ENCODE measurements at regions of chr5 and their contacts with region 1.

Region 1: DNA sequence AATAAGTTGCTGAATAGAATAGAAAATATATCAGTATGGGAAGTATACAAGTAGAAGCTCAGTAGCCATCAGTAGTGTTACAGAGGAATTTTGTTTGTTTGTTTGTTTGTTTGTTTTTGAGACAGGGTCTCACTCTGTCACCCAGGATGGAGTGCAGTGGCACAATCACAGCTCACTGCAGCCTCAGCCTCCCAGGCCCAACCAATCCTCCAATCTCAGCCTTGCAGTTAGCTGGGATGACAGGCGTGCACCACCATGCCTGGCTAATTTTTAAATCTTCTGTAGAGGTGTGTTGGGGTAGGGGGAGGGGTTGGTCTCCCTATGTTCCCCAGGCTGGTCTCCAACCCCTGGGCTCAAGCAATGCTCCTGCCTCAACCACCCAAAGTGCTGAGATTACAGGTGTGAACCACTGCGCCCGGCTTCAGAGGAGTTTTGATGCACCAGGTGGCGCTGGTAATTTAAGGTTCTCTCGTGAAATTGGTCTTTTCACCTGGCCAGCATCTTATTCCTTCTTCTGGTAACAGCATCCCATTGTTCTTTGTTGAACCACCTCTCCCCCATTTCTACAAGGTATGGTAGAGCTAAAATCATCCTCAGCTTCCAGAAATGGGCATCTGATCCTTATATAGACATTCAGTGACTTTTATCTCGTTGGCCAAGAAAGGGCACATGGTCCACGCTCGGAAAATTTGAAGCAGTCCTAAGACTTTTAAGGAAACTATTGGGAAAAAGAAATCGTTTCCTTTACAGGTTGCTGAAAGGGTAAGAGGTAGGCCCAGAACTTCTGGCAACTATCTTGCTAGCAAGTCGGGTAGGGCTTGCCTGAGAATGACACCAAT is 157.1 kb downstream of the ARRDC3 start:
- DNase-seq: peak; percentile 42
- CTCF ChIP-seq: peak; percentile 52

Region 2: DNA sequence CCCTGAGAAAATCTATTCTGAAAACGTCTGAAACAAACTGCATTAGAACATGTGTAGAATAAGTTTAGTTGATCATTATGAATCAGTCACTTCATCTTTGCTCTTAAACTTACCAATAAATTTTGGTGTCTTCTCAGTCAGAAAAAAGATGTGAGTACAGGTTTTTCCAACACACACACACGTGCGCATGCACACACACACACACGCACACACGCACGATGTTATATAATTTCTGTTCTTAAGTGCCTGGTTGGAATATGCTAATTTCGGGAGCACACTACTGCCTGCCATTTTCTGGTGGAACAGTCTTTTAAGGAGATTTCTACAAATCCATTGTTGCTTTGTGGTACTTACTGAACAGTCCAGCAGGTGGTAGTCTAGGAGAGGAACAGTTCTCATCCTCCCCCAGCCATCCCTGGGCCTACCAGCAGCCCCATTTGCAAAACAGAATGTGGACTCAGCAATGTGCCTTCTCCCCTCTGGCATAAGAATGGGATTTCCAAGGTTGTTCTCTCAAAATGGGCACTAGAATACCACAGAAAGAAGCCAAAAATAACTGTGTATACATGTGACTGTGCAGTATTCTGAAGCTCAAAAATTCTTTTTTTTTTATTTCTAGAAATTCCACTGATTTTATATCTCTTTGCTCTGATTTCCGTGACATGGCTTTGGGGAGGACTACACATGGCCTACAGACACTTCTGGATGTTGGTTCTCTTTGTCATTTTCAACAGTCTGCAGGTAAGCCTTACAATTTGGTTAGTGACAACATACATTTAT is 124.3 kb before region 1 on chr5:
- in situ Hi-C with region 1: loop called (anchors 10 kb)
- DNase-seq: peak; percentile 45
- CTCF ChIP-seq: peak; percentile 62

Region 3: DNA sequence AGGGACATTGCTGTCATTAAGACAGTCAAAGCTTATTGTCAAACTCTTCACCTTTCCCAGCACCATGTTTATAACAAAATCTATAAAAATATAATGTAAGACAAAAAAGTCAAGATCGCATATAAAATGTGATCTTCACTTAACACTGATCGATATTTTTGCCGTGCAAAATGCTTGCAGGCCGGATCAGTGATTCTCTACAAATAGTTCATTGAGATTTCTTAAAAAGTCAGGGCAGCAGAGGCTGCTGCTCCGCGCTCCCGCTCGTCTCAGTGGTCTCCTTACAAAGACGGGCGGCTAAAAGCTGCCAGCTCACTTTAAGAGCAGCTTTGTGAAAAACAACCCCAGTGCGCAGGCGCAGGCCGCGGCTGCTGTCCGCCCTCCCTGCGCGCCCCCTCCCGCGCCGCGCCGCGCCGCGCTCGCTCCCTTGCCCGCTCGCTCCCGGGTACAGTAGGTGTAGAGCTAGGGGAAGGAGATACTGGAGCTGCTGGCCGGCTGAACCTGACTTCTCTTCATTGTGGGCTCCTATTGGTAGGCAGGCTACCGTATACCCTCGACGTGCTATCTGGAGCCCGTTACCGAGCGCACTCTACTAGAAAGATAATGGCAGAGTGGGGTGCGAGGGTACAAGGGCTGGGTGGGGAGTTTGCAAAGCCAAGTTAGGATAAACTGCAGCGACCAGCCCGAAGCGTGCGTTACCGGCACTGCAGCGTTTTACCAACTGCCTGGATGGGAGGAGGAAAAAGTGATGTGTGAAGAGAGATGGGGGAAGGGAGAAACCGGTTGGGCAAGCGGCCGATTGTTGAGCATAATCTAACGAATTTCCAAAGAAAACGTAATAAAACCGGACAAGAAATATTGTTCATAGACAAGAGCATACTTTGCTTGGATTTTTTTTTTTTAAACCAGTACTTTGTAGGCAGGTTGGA is 157.2 kb after region 1 on chr5 and contains the start of gene ARRDC3:
- in situ Hi-C with region 1: loop called (anchors 10 kb)
- DNase-seq: peak; percentile 85
- CTCF ChIP-seq: no peak